GM10248 (cell line): ENCODE measurements at regions of chr2 and their contacts with region 1.

Region 1: GRCh38 chr2:45771261-45771660 is 119.8 kb downstream of the PRKCE start:
- DNase-seq: no peak
- CTCF ChIP-seq: no peak

Region 2: GRCh38 chr2:45759310-45759851 is 11.9 kb before region 1 on chr2:
- CTCF ChIA-PET with region 1: interaction called, 30 read pairs
- POLR2A ChIA-PET with region 1: no interaction called
- DNase-seq: no peak
- CTCF ChIP-seq: no peak